Activated CD4-positive, alpha-beta T cell treated with anti-CD3 and anti-CD28 coated beads for 36 hours (primary cell): ENCODE measurements at regions of chr14 and their contacts with region 1.

Region 1: DNA sequence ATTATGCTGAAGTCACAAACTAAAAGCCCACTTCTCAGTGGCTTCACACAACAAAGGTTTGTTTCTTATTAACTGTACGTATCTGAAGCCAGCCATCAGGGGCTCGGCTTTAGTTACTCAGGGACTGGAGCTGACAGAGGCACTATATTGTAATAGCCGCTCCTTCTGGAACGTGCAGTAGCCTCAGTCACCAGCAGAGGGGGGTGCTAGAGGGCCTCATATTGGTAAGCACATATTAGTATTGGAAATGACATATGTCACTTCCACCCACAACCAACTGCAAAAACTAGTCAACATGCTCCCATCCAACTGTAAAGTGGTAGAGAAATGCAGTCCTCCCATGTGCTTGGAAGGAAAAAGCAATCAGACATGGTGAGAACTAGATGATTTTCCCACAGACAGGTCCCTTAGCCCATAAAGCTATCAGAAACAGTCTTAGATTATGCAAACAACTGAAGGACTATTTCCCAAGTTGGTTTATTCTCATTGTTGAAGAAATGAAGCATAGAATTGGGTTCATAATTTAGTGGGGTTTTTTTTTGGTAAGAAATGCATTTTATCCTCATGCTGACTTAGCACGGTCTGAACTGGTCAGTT is 183.6 kb upstream of the G2E3 start:
- DNase-seq: peak; percentile 84
- ATAC-seq: peak; percentile 97
- H3K4me3 Mint-ChIP-seq: no peak overlapping the region
- H3K27ac Mint-ChIP-seq: no peak overlapping the region
- H3K4me1 Mint-ChIP-seq: no peaks in the 10 kb centered on the region
- H3K27me3 Mint-ChIP-seq: peaks cover 15% of the 10 kb centered on the region

Region 2: GRCh38 chr14:30443368-30444007 is 68.1 kb after region 1 on chr14:
- CTCF ChIA-PET with region 1: interaction called, 13 read pairs
- POLR2A ChIA-PET with region 1: no interaction called
- intact Hi-C with region 1: loop called in 1 of 2 experiments (anchors 5 kb)
- DNase-seq: no peak
- ATAC-seq: no peak
- H3K4me3 Mint-ChIP-seq: no peak overlapping the region
- H3K27ac Mint-ChIP-seq: no peak overlapping the region
- H3K4me1 Mint-ChIP-seq: no peaks in the 10 kb centered on the region
- H3K27me3 Mint-ChIP-seq: peaks cover 5% of the 10 kb centered on the region

Region 3: GRCh38 chr14:30521899-30522736 is 146.7 kb after region 1 on chr14:
- CTCF ChIA-PET with region 1: interaction called, 40 read pairs
- POLR2A ChIA-PET with region 1: no interaction called
- intact Hi-C with region 1: loop called (anchors 1 kb)
- DNase-seq: no peak
- ATAC-seq: peak; percentile 39
- H3K4me3 Mint-ChIP-seq: no peak overlapping the region
- H3K27ac Mint-ChIP-seq: no peak overlapping the region
- H3K4me1 Mint-ChIP-seq: peaks cover 10% of the 10 kb centered on the region
- H3K27me3 Mint-ChIP-seq: no peaks in the 10 kb centered on the region

Region 4: DNA sequence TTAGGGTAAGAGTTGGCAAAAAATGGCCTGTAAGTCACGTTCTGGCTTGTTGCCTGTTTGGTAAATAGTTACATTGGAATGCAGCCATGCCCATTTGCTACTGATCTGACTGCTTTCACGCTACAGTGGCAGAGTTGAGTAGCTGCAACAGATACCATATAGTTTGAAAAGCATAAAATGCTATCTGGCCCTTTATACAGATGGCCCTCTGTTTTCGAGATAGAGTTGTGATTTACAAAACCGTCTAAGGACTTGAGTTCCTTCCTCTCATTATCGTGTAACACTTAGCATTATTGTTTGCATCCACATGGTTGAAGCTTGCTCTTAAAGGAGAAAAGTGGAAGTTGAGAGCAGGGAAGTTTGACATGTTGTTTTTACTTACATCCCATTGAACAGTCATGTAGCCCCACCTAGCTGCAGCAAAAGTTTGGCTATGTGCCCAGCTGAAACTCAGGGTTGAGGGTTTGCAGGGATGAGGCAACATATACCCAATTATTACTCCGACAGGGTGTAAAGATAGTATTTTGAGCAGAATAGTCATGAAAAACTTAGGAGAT is 235.5 kb after region 1 on chr14:
- CTCF ChIA-PET with region 1: interaction called, 3 read pairs
- POLR2A ChIA-PET with region 1: no interaction called
- intact Hi-C with region 1: loop called in 1 of 2 experiments (anchors 1 kb)
- DNase-seq: peak; percentile 57
- ATAC-seq: no peak
- H3K4me3 Mint-ChIP-seq: no peak overlapping the region
- H3K27ac Mint-ChIP-seq: no peak overlapping the region
- H3K4me1 Mint-ChIP-seq: peaks cover 2% of the 10 kb centered on the region
- H3K27me3 Mint-ChIP-seq: no peaks in the 10 kb centered on the region

Region 5: GRCh38 chr14:31529053-31529452 is 1153.7 kb after region 1 on chr14:
- CTCF ChIA-PET with region 1: no interaction called
- POLR2A ChIA-PET with region 1: no interaction called
- intact Hi-C with region 1: no loop called
- DNase-seq: no peak
- ATAC-seq: no peak
- H3K4me3 Mint-ChIP-seq: no peak overlapping the region
- H3K27ac Mint-ChIP-seq: no peak overlapping the region
- H3K4me1 Mint-ChIP-seq: no peaks in the 10 kb centered on the region
- H3K27me3 Mint-ChIP-seq: no peaks in the 10 kb centered on the region